Aorta (tissue), 5 donors: ENCODE measurements at regions of chr22 and their contacts with region 1.

Region 1: DNA sequence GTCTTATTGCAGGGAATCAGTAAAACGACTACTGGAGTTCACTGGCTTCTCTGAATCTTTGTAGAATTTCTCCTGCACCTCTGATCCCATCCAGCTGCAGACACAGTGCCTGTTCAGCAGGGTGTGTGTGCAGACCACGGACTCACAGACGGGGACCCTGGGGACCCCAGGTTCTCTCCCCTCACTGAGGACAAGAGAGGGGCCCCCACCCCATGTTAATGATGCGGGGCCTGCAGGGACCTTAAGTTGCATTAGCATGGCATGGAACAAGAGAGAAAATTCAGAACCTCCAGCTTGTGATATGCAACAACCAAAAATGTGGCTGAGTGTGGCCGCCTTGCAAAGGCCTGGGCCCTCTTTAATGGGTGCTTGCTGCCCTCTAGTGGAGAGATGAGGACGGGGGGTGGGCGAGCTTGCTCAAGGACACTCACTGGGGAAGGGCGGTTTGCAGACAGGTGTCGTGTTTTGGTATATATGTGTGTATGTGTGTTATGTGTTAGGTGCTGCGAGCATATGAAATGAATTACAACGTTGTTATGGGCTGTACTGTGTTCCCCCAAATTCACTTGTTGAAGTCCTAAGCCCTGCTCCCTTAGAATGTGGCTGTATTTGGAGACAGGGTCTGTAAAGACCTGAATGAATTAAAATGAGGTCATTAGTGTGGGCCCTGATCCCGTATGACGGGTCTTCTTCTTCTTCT is 84.4 kb upstream of the SEPTIN5 start:
- DNase-seq: peak; percentile 80 to 89
- ATAC-seq: peak; percentile 79
- H3K4me3 ChIP-seq: no peak overlapping the region
- H3K27ac ChIP-seq: no peak overlapping the region
- H3K4me1 ChIP-seq: no peaks in the 10 kb centered on the region
- H3K27me3 ChIP-seq: no peaks in the 10 kb centered on the region

Region 2: GRCh38 chr22:18954990-18955571 is 674.8 kb before region 1 on chr22:
- intact Hi-C with region 1: loop called in 1 of 2 experiments (anchors 5 kb)
- DNase-seq: peak; percentile 43 to 71
- ATAC-seq: no peak
- H3K4me3 ChIP-seq: no peak overlapping the region
- H3K27ac ChIP-seq: no peak overlapping the region
- H3K4me1 ChIP-seq: no peaks in the 10 kb centered on the region
- H3K27me3 ChIP-seq: no peaks in the 10 kb centered on the region

Region 3: GRCh38 chr22:19149047-19149883 is 480.6 kb before region 1 on chr22:
- intact Hi-C with region 1: loop called in 1 of 2 experiments (anchors 5 kb)
- DNase-seq: no peak
- ATAC-seq: no peak
- H3K4me3 ChIP-seq: peak overlapping the region; percentile 9 to 31
- H3K27ac ChIP-seq: no peak overlapping the region
- H3K4me1 ChIP-seq: no peaks in the 10 kb centered on the region
- H3K27me3 ChIP-seq: no peaks in the 10 kb centered on the region

Region 4: DNA sequence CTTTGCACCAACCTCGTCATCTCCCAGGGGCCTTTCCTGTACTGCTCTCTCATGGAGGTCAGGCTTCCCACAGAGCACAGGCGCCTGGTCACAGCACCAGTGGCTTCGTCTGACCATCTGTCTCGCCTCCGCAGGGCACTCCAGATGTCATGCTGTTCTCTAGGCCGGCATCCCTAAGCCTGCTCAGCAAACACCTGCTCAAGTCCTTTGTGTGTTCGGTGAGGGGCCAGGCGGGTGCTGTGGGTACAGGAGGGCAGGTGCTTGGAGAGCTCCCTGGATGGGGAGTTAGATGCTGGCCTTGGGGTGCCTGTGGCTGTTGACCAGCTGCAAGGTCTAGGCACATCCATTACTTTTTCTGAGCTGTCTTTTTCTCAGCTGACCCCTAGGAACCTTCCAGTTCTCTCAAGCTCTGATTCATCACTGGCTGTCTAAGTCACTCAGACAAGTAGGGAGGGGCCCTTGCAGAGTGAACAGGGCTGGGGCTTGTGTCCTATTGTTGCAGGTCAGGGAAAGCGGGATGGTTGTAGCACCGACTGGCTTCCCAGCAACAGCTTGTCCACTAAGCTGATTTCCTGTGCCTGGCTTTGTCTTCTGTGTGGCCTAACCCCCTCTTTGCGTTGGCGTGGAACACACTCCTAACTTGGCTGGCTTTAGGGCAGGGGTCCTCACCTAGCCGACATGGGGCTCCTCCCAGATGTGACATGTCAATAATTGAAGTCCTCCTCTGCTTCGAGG is 114.9 kb before region 1 on chr22:
- intact Hi-C with region 1: loop called in 1 of 2 experiments (anchors 10 kb)
- DNase-seq: no peak
- ATAC-seq: no peak
- H3K4me3 ChIP-seq: no peak overlapping the region
- H3K27ac ChIP-seq: no peak overlapping the region
- H3K4me1 ChIP-seq: no peaks in the 10 kb centered on the region
- H3K27me3 ChIP-seq: no peaks in the 10 kb centered on the region

Region 5: DNA sequence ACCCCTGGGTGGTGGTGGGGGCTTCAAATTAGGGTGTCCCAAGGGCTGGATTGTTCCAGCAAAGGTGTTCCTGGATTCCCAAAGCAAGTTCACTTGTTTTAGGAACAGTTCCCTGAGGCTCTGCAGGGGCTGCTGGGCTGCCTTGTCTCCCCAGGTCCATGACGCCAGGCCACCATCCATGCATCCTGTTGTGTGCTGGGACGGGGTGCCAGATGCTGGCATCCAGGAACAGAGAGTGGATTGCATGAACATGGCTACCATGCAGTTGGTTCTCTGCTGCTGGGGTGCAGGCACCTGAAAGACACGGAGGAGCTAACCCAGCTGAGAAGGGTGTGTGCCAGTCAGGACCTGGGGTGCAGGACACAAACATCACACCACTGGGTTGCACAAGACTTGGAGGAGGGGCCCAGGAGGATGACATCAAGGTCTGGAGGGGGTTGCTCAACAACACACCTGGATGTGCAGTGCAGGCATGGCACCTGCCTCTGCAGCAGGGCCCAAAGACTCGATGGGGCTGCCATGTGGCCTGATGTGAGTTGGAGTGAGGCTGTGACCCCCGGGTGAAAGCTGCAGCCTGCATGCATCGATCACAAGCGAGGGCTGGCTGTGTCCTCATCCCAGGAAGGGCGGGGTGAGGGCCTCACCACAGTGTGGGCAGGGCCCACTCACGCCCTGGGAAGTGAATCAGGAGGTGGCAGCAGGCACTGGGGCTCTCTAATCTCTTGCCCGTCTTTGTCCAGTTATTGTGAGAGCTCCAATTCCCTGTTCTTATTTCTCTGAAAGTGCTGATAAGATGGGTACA is 31.6 kb before region 1 on chr22:
- intact Hi-C with region 1: no loop called
- DNase-seq: no peak
- ATAC-seq: no peak
- H3K4me3 ChIP-seq: no peak overlapping the region
- H3K27ac ChIP-seq: no peak overlapping the region
- H3K4me1 ChIP-seq: no peaks in the 10 kb centered on the region
- H3K27me3 ChIP-seq: no peaks in the 10 kb centered on the region

Region 6: GRCh38 chr22:19730655-19731360 is 100.9 kb after region 1 on chr22:
- intact Hi-C with region 1: no loop called
- DNase-seq: peak; percentile 90 to 97
- ATAC-seq: peak; percentile 89
- H3K4me3 ChIP-seq: no peak overlapping the region
- H3K27ac ChIP-seq: no peak overlapping the region
- H3K4me1 ChIP-seq: no peaks in the 10 kb centered on the region
- H3K27me3 ChIP-seq: no peaks in the 10 kb centered on the region